Transverse colon (tissue), 4 donors: ENCODE measurements at regions of chr20 and their contacts with region 1.

Region 1: DNA sequence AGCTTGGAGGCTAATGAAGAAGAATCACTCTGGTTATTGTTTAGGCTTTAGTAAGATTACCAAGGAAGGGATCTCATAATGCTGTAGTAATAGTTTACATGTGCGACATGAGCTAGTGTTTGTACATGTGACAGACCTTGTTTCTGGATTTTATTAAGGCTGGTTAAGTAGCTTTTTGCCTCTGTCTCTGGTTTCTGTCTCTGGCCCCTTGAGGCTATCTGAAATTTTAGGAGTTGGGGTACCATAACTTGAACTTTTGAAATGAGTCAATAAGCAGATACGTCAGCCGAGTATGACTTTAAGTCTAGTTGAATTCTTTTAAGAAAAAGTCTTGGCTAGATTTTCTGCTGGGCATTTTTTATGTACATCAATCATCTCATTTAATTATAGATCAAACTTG is 9.5 kb downstream of the CBFA2T2 start:
- DNase-seq: no peak
- H3K4me3 ChIP-seq: no peak overlapping the region
- H3K27ac ChIP-seq: no peak overlapping the region
- H3K4me1 ChIP-seq: peaks cover 0 to 33% (median 8%) of the 10 kb centered on the region in 4 donors
- H3K27me3 ChIP-seq: no peaks in the 10 kb centered on the region
- CTCF ChIP-seq: no peak
- EP300 ChIP-seq: no peak
- POLR2A ChIP-seq: no peak

Region 2: GRCh38 chr20:31560094-31560899 is 1939.1 kb before region 1 on chr20:
- in situ Hi-C with region 1: no loop called
- intact Hi-C with region 1: no loop called
- DNase-seq: peak; percentile 76
- H3K4me3 ChIP-seq: no peak overlapping the region
- H3K27ac ChIP-seq: peak overlapping the region; percentile 39 to 72 (median 48)
- H3K4me1 ChIP-seq: peaks cover 0 to 23% (median 8%) of the 10 kb centered on the region in 4 donors
- H3K27me3 ChIP-seq: no peaks in the 10 kb centered on the region
- CTCF ChIP-seq: peak; percentile 85 to 92 (median 88)
- EP300 ChIP-seq: no peak
- POLR2A ChIP-seq: no peak

Region 3: GRCh38 chr20:33515569-33516216 is 16.3 kb after region 1 on chr20:
- in situ Hi-C with region 1: no loop called
- intact Hi-C with region 1: no loop called
- DNase-seq: no peak
- H3K4me3 ChIP-seq: no peak overlapping the region
- H3K27ac ChIP-seq: no peak overlapping the region
- H3K4me1 ChIP-seq: peaks cover 0 to 53% (median 16%) of the 10 kb centered on the region in 4 donors
- H3K27me3 ChIP-seq: no peaks in the 10 kb centered on the region
- CTCF ChIP-seq: peak in 2 of 5 experiments; percentile 23 to 26
- EP300 ChIP-seq: no peak
- POLR2A ChIP-seq: no peak

Region 4: DNA sequence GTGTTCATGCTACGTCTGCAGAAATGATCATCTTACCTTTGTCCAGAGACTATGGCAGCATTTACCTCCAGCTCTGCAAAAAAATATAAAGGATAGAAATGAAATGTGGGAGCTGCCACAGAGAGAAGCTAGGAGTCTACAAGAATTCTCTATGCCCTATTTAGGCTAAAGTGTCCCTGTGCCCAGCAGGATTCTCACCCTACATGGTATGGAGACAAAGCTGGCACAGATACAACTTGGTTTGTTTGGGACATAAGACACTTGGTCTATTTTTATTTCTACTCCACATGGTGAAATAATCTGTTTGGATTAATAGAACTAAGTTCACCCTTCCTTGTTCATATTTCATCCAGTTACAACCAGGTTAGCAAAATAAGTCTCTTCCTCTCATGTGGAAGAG is 1233.2 kb after region 1 on chr20:
- in situ Hi-C with region 1: no loop called
- intact Hi-C with region 1: no loop called
- DNase-seq: no peak
- H3K4me3 ChIP-seq: no peak overlapping the region
- H3K27ac ChIP-seq: no peak overlapping the region
- H3K4me1 ChIP-seq: no peaks in the 10 kb centered on the region
- H3K27me3 ChIP-seq: no peaks in the 10 kb centered on the region
- CTCF ChIP-seq: no peak
- EP300 ChIP-seq: no peak
- POLR2A ChIP-seq: no peak

Region 5: DNA sequence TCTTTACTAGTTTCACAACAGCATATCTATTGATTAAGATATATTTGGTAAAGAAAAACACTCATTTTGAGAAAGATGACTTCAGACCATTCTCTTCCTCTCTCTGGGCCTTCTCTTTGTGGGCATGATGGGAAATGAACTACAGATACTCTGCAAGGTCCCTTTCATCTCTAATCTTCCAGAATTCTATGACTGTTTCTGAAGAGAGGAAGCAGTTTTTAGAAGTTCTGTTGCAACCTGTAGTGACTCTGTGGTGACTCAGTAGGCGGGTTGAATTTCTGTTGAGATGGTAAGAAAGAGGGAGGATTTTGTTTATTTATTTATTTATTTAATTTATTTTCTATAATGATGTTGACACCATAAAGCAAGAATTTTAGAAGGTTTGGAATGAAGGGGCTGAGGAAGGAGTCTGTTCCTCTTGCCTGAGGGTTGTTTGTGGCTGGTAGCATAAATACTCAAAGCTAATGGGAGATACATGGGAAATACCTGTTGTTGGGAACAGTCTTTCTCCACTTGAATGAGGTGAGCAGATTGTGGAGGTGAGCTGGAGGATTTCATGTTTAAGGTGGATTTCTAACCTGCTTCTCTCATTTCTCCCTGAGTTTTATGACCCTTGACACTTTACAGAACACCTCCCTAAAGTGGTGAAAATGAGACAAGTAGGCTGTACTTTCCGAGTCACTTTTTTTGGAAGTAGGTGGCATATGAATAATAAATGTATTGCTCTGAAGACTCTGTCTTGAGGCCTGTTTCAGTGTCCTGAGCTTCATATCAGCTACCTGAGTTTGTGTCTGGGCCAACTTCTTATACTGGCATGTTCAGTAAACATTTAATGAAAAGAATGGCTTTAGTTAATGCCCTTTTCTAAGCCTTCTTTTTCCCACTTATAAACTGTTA is 1392.1 kb after region 1 on chr20:
- in situ Hi-C with region 1: no loop called
- intact Hi-C with region 1: loop called (anchors 5 kb)
- DNase-seq: no peak
- H3K4me3 ChIP-seq: no peak overlapping the region
- H3K27ac ChIP-seq: peak overlapping the region in 2 of 4 donors; percentile 10 to 14
- H3K4me1 ChIP-seq: peaks cover 8 to 69% (median 31%) of the 10 kb centered on the region in 4 donors
- H3K27me3 ChIP-seq: no peaks in the 10 kb centered on the region
- CTCF ChIP-seq: no peak
- EP300 ChIP-seq: no peak
- POLR2A ChIP-seq: no peak